AG04450 (cell line): ENCODE measurements at regions of chr3 and their contacts with region 1.

Region 1: GRCh38 chr3:184688251-184688881 is 23.5 kb downstream of the MAGEF1 start:
- DNase-seq: peak; percentile 66
- H3K4me3 ChIP-seq: no peak overlapping the region
- H3K27ac ChIP-seq: peak overlapping the region; percentile 88
- H3K27me3 ChIP-seq: peaks cover 13% of the 10 kb centered on the region
- CTCF ChIP-seq: no peak

Region 2: GRCh38 chr3:184602416-184603150 is 85.8 kb before region 1 on chr3:
- CTCF ChIA-PET with region 1: no interaction called
- POLR2A ChIA-PET with region 1: no interaction called
- DNase-seq: no peak
- H3K4me3 ChIP-seq: no peak overlapping the region
- H3K27ac ChIP-seq: no peak overlapping the region
- H3K27me3 ChIP-seq: peaks cover 69% of the 10 kb centered on the region
- CTCF ChIP-seq: no peak

Region 3: GRCh38 chr3:184636741-184637316 is 51.5 kb before region 1 on chr3:
- CTCF ChIA-PET with region 1: no interaction called
- POLR2A ChIA-PET with region 1: interaction called, 15 read pairs
- DNase-seq: peak; percentile 36
- H3K4me3 ChIP-seq: no peak overlapping the region
- H3K27ac ChIP-seq: no peak overlapping the region
- H3K27me3 ChIP-seq: peaks cover 8% of the 10 kb centered on the region
- CTCF ChIP-seq: no peak

Region 4: GRCh38 chr3:184672977-184673870 is 15.1 kb before region 1 on chr3:
- CTCF ChIA-PET with region 1: interaction called, 3 read pairs
- POLR2A ChIA-PET with region 1: interaction called, 11 read pairs
- DNase-seq: no peak
- H3K4me3 ChIP-seq: no peak overlapping the region
- H3K27ac ChIP-seq: peak overlapping the region; percentile 39
- H3K27me3 ChIP-seq: peaks cover 43% of the 10 kb centered on the region
- CTCF ChIP-seq: no peak

Region 5: GRCh38 chr3:184711493-184712247 is 23.3 kb after region 1 on chr3 and contains the start of gene MAGEF1:
- CTCF ChIA-PET with region 1: interaction called, 3 read pairs
- POLR2A ChIA-PET with region 1: interaction called, 27 read pairs
- DNase-seq: peak; percentile 48
- H3K4me3 ChIP-seq: peak within 1 kb of the TSS; percentile 81
- H3K27ac ChIP-seq: peak within 1 kb of the TSS; percentile 89
- H3K27me3 ChIP-seq: no peaks in the 10 kb centered on the region
- CTCF ChIP-seq: no peak
- polyA plus RNA-seq, gene MAGEF1: 19.8 and 23.4 TPM in 2 replicates

Region 6: DNA sequence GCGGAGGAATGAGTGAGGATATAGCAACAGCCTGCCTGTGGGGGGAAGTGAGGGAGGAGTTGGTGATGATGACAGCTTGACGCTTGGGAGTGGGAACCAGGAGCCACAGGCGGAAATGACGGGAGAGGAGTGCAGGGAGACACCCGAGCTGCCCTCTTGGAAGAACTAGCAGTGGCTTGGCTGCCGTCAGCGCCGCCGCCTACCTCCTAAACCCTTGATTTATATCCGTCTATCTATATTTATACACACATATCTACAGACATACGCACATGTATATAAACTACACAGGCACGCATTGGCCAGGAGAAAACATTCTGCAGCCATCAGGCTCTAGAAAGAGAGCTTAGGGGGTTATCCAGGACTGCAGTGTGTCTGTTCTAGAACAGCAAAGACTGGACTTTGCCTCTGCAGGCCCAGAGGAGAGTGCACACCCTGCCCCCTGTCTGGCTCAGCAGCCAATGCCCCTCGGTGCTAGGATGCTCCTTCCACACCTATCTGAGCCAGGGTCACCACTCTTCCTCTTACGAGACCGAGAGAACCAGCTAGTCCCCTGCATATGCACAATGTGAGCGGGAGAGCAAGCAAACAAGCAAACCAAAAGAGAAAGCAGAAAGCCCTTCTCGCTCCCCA is 68.8 kb after region 1 on chr3:
- CTCF ChIA-PET with region 1: no interaction called
- POLR2A ChIA-PET with region 1: interaction called, 15 read pairs
- DNase-seq: peak; percentile 95
- H3K4me3 ChIP-seq: peak overlapping the region; percentile 38
- H3K27ac ChIP-seq: peak overlapping the region; percentile 97
- H3K27me3 ChIP-seq: no peaks in the 10 kb centered on the region
- CTCF ChIP-seq: no peak

Region 7: DNA sequence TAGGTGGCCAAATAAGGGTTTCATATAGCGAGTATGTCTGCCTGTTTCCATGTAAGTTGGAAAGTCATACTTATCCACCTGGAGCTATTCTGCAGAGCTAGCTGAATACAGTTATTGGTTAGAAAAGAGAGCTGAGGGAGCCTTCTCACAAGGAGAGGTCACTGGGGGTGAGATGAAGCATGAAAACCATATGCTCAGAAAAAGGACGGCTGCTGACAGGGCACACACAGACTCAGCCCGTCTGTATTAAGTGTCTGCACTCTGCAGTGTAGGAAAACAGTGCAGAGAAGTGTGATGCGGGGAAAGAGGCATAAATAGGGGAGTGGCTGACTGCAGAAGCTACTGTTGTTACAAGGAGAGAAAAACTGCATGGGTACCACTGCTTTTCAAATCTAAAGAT is 406.3 kb after region 1 on chr3:
- CTCF ChIA-PET with region 1: no interaction called
- POLR2A ChIA-PET with region 1: no interaction called
- DNase-seq: no peak
- H3K4me3 ChIP-seq: no peak overlapping the region
- H3K27ac ChIP-seq: no peak overlapping the region
- H3K27me3 ChIP-seq: no peaks in the 10 kb centered on the region
- CTCF ChIP-seq: no peak